ENCODE measurements at regions of chr13 and their contacts with region 1.

Region 1: GRCh38 chr13:75219479-75220237 is 262.3 kb downstream of the TBC1D4 start:
- DNase-seq: peak; percentile 69 to 88 (median 83)
- H3K4me3 ChIP-seq: peak overlapping the region in 1 of 4 donors; percentile 5
- H3K27ac ChIP-seq: no peak overlapping the region
- H3K4me1 ChIP-seq: no peaks in the 10 kb centered on the region
- H3K27me3 ChIP-seq: peaks cover 4% of the 10 kb centered on the region
- CTCF ChIP-seq: peak; percentile 87 to 98 (median 94)
- POLR2A ChIP-seq: no peak

Region 2: DNA sequence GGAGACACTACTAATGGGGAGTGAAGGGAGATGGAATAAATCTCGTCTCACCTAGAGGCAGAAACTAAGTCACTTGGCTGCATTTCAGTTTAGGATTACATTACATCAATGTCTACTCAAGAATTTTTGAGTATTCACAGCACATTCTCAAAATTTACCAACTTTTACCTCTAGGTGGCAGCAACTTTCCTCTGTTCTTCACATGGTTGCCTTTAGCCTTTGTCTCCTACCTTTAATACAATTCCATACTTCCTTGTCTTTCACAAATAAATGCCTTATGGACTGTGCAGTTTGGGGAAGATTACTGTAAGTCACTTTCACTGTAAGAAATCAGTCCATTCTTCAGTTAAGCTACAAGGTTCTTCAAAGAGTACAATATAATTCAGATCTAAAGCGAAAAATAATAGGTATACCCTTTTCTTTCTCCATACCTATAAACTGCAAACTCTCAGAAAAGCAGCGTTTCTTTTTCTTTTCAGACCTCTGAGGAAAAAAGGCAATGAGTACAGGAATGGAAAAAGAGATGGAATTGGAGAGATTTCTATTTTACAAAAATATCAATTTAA is 1464.8 kb before region 1 on chr13:
- intact Hi-C with region 1: loop called in 1 of 2 experiments (anchors 10 kb)
- DNase-seq: peak in 3 of 7 donors; percentile 26 to 40 (median 29)
- H3K4me3 ChIP-seq: no peak overlapping the region
- H3K27ac ChIP-seq: no peak overlapping the region
- H3K4me1 ChIP-seq: peaks cover 0 to 10% of the 10 kb centered on the region in 2 donors
- H3K27me3 ChIP-seq: no peaks in the 10 kb centered on the region
- CTCF ChIP-seq: peak; percentile 45 to 73 (median 62)
- POLR2A ChIP-seq: no peak

Region 3: DNA sequence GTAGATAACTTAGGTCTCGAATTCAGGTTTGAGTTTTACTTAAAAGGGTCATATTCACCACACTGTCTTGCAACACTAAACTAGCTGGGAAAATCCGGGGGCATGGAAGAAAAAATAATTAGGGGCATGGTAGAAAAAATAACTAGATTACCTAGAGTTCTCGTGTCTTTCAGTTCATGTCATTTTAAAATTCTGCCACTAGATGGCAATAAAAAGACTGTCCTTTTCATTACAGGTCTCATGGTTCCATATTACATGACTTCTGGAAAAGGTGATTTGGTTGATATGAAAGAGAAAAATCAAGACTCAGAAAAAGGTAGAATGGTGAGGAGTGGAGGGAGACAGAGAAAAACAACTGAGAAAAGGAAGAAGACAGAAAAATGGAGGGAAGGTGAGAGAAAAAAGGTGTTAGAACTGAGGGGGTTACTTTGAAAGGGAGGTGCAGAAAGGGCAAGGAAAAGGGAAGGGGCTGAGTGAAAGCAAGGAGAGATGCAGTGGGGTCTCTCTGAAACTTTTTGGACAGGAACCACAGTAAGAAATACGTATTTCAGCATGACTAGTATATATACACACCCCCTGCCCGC is 1384.4 kb before region 1 on chr13:
- intact Hi-C with region 1: loop called in 1 of 2 experiments (anchors 5 kb)
- DNase-seq: no peak
- H3K4me3 ChIP-seq: no peak overlapping the region
- H3K27ac ChIP-seq: no peak overlapping the region
- H3K4me1 ChIP-seq: no peaks in the 10 kb centered on the region
- H3K27me3 ChIP-seq: no peaks in the 10 kb centered on the region
- CTCF ChIP-seq: peak; percentile 57 to 84 (median 70)
- POLR2A ChIP-seq: no peak

Region 4: DNA sequence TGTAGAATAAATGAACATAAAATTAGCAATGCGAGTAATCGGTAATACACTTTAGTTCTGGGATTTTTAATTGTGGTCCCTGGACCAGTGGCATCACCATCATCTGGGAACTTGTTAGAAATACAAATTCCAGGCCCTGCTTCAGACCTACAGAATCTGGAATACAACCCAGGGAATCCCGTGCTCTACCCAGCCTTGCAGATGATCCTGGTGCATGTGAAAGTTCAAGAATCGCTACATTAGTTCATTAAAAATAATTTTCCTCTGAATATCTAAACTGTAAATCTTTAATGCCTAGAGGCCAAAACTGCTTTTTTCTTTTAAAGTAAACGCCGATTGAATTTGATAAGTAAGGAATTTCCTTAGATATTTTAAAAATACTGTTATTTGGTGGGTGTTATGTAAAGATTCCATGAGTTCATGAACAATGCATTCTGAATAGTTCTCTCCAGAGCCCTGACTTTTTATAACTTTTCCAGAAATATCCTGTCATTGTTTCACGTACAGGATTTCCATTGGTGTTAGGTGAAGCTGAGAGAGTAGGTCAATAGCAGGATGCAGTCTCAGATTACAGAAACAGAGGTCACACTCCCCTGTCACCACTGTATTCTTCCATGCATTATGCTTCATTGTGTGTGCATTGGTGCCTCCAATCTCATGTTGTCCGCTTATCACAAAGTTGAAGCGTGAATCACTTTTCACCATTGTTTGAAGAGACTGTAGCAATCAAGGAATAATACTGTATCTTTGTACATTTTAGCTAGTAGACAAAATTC is 488.9 kb before region 1 on chr13:
- intact Hi-C with region 1: no loop called
- DNase-seq: no peak
- H3K4me3 ChIP-seq: no peak overlapping the region
- H3K27ac ChIP-seq: no peak overlapping the region
- H3K4me1 ChIP-seq: no peaks in the 10 kb centered on the region
- H3K27me3 ChIP-seq: no peaks in the 10 kb centered on the region
- CTCF ChIP-seq: no peak
- POLR2A ChIP-seq: no peak

Region 5: GRCh38 chr13:75581874-75582640 is 362.4 kb after region 1 on chr13:
- intact Hi-C with region 1: no loop called
- DNase-seq: peak in 3 of 7 donors; percentile 11 to 16 (median 15)
- H3K4me3 ChIP-seq: no peak overlapping the region
- H3K27ac ChIP-seq: no peak overlapping the region
- H3K4me1 ChIP-seq: no peaks in the 10 kb centered on the region
- H3K27me3 ChIP-seq: no peaks in the 10 kb centered on the region
- CTCF ChIP-seq: no peak
- POLR2A ChIP-seq: no peak

Measured in adrenal gland (tissue), 19 donors.